ENCODE measurements at regions of chr10 and their contacts with region 1.

Region 1: DNA sequence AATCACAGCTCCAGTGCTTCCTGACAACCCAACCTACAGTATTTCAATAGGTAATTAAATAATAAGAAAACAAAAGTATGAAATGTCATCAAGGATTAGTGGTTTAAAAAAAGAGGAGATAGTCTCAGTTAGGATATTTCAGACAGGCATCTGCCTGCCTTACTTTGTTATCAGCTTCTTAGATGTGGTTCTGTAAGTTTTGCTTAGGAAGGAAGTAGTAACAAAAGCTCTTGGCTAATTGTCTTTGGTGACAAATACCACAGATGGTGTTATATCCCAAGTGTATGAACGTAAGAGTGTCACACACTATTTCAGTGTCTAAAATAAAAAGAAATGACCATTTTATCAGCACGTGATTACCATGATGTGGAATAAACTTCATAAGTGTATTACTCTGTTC is 9.8 kb upstream of the ACTA2 start:
- DNase-seq: no peak
- ATAC-seq: no peak
- H3K4me3 Mint-ChIP-seq: no peak overlapping the region
- H3K27ac Mint-ChIP-seq: no peak overlapping the region
- H3K4me1 Mint-ChIP-seq: peaks cover 26% of the 10 kb centered on the region
- H3K27me3 Mint-ChIP-seq: no peaks in the 10 kb centered on the region

Region 2: DNA sequence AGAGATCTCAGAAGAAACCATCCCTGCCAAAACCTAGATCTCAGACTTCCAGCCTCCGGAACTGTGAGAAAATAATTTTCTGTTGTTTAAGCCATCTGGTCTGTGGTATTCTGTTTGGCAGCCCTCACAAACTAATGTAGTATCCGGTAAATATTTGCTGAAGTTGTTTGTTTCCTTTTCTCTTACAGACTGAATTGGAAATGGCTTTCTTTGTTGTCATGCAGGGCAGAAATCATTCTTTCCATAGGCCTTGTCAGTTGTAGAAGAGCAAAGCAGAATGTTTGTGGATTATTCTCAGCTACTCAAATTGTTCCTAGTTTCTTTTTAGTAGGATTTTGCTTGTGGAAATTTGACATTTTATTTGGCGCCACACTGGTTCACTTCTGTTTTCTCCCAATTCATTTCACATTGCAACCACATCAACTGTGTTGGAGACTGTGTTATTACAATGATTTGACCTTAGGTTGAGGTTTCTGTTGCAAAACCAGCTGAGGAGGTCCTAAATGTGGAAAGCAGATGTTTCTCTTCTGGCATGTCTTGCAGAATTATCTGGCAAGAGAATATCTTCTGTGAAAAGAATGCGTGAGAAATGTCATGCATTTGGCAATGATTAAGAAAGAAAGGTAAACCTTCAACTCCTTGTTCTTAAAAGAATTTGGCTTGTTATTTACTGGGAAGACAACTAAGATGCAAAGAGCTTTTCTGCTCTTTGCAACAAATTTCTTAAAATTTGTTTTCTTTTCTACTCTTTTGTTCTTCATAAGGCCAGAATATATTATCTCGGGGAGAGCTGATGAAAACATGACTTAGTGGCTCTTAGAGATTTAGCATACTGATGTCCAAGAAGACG is 35.5 kb before region 1 on chr10:
- CTCF ChIA-PET with region 1: no interaction called
- POLR2A ChIA-PET with region 1: no interaction called
- intact Hi-C with region 1: no loop called
- DNase-seq: no peak
- ATAC-seq: no peak
- H3K4me3 Mint-ChIP-seq: no peak overlapping the region
- H3K27ac Mint-ChIP-seq: no peak overlapping the region
- H3K4me1 Mint-ChIP-seq: peaks cover 3% of the 10 kb centered on the region
- H3K27me3 Mint-ChIP-seq: no peaks in the 10 kb centered on the region

Region 3: GRCh38 chr10:88974446-88975376 is 12.4 kb after region 1 on chr10:
- CTCF ChIA-PET with region 1: interaction called, 14 read pairs
- POLR2A ChIA-PET with region 1: no interaction called
- intact Hi-C with region 1: no loop called
- DNase-seq: no peak
- ATAC-seq: peak; percentile 71
- H3K4me3 Mint-ChIP-seq: peak overlapping the region; percentile 80
- H3K27ac Mint-ChIP-seq: peak overlapping the region; percentile 96
- H3K4me1 Mint-ChIP-seq: peaks cover 16% of the 10 kb centered on the region
- H3K27me3 Mint-ChIP-seq: no peaks in the 10 kb centered on the region

Region 4: GRCh38 chr10:88996927-88997326 is 34.6 kb after region 1 on chr10:
- CTCF ChIA-PET with region 1: interaction called, 5 read pairs
- POLR2A ChIA-PET with region 1: interaction called, 5 read pairs
- intact Hi-C with region 1: loop called in 1 of 2 experiments (anchors 5 kb)
- DNase-seq: no peak
- ATAC-seq: no peak
- H3K4me3 Mint-ChIP-seq: no peak overlapping the region
- H3K27ac Mint-ChIP-seq: no peak overlapping the region
- H3K4me1 Mint-ChIP-seq: peaks cover 67% of the 10 kb centered on the region
- H3K27me3 Mint-ChIP-seq: no peaks in the 10 kb centered on the region

Region 5: DNA sequence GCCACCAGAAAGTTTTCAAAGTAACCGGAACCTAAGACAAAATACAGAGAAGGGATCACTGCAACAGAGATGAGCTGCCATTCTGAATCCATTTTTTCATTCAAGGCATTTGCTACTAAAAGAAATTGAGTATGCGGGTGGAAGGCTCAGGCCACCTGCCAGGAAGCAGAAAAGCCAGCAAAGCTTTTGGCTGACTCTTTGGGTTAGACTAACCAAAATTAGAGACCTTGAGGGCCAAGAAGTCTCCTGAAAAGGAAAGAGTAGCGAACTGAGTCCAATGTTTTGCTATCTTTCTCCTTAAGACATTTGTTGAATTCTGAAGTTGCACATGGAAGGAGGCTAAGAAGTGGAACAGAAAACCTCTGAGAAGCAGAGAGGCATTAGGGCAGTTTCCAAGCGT is 107.3 kb after region 1 on chr10:
- CTCF ChIA-PET with region 1: no interaction called
- POLR2A ChIA-PET with region 1: no interaction called
- intact Hi-C with region 1: no loop called
- DNase-seq: no peak
- ATAC-seq: no peak
- H3K4me3 Mint-ChIP-seq: no peak overlapping the region
- H3K27ac Mint-ChIP-seq: no peak overlapping the region
- H3K4me1 Mint-ChIP-seq: no peaks in the 10 kb centered on the region
- H3K27me3 Mint-ChIP-seq: peaks cover 12% of the 10 kb centered on the region

Measured in activated CD4-positive, alpha-beta T cell treated with anti-CD3 and anti-CD28 coated beads for 36 hours (primary cell).